ENCODE measurements at regions of chr2 and their contacts with region 1.

Region 1: DNA sequence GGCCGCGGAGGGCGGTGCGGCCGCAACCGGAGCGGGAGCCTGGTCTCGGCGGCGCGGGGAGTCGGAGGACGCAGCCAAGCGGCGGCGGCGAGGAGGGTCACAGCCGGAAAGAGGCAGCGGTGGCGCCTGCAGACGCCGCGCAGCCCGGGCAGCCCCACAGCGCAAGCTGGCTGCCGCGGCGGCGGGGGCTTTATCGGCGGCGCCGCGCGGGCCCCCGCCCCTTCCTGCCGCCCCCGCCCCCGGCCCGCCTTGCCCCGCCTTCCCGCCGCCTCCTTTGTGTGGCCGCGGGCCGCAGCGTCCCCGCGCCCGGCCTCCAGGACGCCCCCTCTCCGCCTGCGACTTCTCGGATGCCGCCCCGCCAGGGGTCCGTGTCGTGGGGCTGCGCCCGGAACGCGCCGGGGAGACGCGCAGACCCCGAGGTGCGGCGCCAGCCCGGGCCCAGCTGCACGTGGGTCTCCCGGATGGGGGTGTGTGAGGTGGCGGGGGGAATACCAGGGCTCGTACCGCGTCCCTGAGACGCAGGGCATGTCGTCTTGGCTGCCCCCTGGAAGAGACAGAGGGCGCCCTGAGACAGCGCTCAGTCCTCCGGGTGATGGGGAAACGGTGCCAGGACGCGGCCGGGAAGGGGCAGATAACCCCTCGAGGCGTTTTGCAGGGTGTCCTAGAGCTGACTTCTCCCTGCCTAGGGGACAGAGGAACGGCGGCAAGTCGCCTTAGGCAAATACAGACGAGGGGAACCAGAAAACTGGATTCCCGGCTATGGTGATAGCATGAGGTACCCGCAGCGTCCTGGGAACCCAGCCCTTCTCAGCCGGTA is at the start of gene SERPINE2:
- DNase-seq: peak; percentile 67 to 91
- H3K4me3 ChIP-seq: peak within 1 kb of the TSS; percentile 57
- H3K27ac ChIP-seq: no peak within 1 kb of the TSS
- H3K4me1 ChIP-seq: peaks cover 20% of the 10 kb centered on the region
- H3K27me3 ChIP-seq: no peaks in the 10 kb centered on the region
- CTCF ChIP-seq: peak; percentile 77
- total RNA-seq, gene SERPINE2: 110 and 155 TPM in 2 replicates

Region 2: DNA sequence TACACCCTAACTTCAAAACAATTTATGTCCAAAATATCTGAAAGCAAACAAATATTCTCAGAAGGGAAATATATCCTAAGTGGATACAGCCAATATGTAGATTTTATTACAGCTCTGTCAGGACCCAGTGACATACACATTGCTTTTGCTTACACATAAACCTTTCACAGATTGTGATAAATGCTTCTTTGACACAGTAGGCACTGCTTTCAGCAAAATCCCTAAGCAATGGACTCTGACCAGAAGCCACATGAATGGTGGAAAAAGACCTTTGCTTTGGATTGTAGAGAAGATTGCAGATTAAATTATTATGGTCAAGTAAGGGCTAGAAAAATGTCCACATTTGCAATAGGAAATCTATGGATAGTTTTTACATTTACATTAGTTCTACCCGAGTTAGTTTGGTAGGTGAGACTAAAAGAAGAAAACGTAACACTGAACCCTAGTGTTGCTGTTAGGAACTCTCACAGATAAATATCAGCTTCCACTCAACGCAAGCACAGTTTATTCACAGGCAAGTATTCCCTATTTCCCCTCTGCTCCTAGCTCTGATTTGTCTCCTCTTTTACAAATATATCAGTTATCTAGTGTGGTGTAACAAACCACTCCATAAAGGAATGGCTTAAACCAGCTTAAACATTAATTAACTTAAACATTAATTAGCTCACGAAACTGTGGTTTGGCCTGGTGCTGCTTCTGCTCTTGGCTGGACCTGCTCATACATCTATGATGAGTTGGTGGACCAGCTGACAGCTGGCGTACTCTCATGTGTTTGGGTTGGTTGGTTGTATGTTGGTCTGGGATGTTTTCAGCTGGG is 23.4 kb after region 1 on chr2:
- CTCF ChIA-PET with region 1: no interaction called
- POLR2A ChIA-PET with region 1: interaction called, 11 read pairs
- intact Hi-C with region 1: no loop called
- DNase-seq: no peak
- H3K4me3 ChIP-seq: no peak overlapping the region
- H3K27ac ChIP-seq: no peak overlapping the region
- H3K4me1 ChIP-seq: no peaks in the 10 kb centered on the region
- H3K27me3 ChIP-seq: no peaks in the 10 kb centered on the region
- CTCF ChIP-seq: no peak

Region 3: DNA sequence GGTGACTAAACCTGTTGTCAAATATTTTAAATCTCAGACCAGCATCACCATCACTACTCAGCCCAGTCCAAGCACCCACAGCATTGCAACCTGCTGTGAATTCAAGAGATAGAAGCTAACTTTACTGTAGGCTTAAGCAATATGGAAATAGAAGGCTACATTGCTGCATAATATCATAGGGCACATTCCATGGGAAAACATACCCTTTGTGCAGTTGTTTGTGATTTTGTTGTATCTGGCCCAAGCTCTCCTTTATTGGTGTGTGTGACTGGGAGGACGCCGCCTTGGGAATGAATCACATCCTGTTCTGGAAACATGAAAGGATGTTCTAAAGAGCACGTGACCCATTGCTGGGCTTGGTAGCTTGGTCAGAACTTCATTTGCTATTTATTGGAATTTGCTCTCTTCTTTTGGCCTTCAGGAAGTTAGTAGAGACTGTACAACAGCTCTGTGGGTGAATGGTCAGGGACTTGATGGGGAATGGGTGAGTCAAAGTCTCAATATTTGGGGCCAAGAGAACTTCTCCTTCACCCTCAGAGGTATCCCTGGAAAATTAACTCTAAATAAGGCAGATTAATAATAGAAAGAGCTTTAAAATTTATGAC is 106.5 kb after region 1 on chr2:
- CTCF ChIA-PET with region 1: no interaction called
- POLR2A ChIA-PET with region 1: no interaction called
- intact Hi-C with region 1: loop called (anchors 2 kb)
- DNase-seq: peak; percentile 36 to 51
- H3K4me3 ChIP-seq: no peak overlapping the region
- H3K27ac ChIP-seq: 0 out of 2 replicates have a peak overlapping the region, but pooled peaks have one; percentile 5
- H3K4me1 ChIP-seq: peaks cover 72% of the 10 kb centered on the region
- H3K27me3 ChIP-seq: no peaks in the 10 kb centered on the region
- CTCF ChIP-seq: no peak

Region 4: DNA sequence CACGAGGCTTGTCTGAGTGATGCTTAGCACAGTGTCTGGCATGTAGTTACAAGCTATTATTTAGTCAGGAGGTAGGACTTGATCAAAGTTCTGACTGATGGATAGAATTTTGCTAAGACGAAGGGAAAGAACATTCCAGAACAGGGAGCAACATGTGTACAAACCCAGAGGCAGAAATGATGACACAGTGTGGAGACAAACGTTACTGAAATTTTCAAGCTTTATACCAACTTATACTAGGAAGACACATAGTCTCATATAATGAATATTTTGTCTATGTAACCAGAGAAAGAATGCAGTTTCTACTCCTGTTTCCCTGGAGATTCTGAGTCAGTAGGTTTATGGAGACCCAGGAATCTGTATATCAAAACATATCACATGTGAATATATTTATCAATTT is 239.2 kb after region 1 on chr2:
- CTCF ChIA-PET with region 1: interaction called, 12 read pairs
- POLR2A ChIA-PET with region 1: no interaction called
- intact Hi-C with region 1: no loop called
- DNase-seq: no peak
- H3K4me3 ChIP-seq: no peak overlapping the region
- H3K27ac ChIP-seq: no peak overlapping the region
- H3K4me1 ChIP-seq: no peaks in the 10 kb centered on the region
- H3K27me3 ChIP-seq: no peaks in the 10 kb centered on the region
- CTCF ChIP-seq: no peak